ENCODE measurements at regions of chr14 and their contacts with region 1.

Region 1: GRCh38 chr14:55665067-55665675 is 85.2 kb downstream of the KTN1 start:
- DNase-seq: no peak
- ATAC-seq: no peak
- H3K4me3 ChIP-seq: no peak overlapping the region
- H3K27ac ChIP-seq: no peak overlapping the region
- H3K4me1 ChIP-seq: no peaks in the 10 kb centered on the region
- H3K27me3 ChIP-seq: no peaks in the 10 kb centered on the region
- CTCF ChIP-seq: no peak
- EP300 ChIP-seq: no peak
- POLR2A ChIP-seq: no peak
- RAD21 ChIP-seq: no peak

Region 2: GRCh38 chr14:55123101-55123500 is 542.1 kb before region 1 on chr14:
- CTCF ChIA-PET with region 1: no interaction called
- POLR2A ChIA-PET with region 1: no interaction called
- in situ Hi-C with region 1: no loop called
- intact Hi-C with region 1: no loop called
- DNase-seq: no peak
- ATAC-seq: peak; percentile 22
- H3K4me3 ChIP-seq: peak overlapping the region in 1 of 3 experiments; percentile 34; a peak in 1 of 6 replicates
- H3K27ac ChIP-seq: peak overlapping the region; percentile 61
- H3K4me1 ChIP-seq: peaks cover 48% of the 10 kb centered on the region
- H3K27me3 ChIP-seq: peaks cover 2 to 10% of the 10 kb centered on the region in 2 experiments; a peak in 3 of 5 replicates
- CTCF ChIP-seq: no peak
- EP300 ChIP-seq: no peak
- POLR2A ChIP-seq: no peak
- RAD21 ChIP-seq: no peak

Region 3: GRCh38 chr14:55446218-55446654 is 218.9 kb before region 1 on chr14:
- CTCF ChIA-PET with region 1: no interaction called
- POLR2A ChIA-PET with region 1: no interaction called
- in situ Hi-C with region 1: loop called (anchors 25 kb)
- intact Hi-C with region 1: no loop called
- DNase-seq: peak; percentile 64
- ATAC-seq: peak; percentile 80
- H3K4me3 ChIP-seq: no peak overlapping the region
- H3K27ac ChIP-seq: no peak overlapping the region
- H3K4me1 ChIP-seq: 0 out of 2 replicates have a peak, but pooled peaks cover 5% of the 10 kb centered on the region
- H3K27me3 ChIP-seq: peaks cover 0 to 4% of the 10 kb centered on the region in 2 experiments; a peak in 1 of 5 replicates
- CTCF ChIP-seq: peak; percentile 78
- EP300 ChIP-seq: no peak
- POLR2A ChIP-seq: no peak
- RAD21 ChIP-seq: no peak

Region 4: DNA sequence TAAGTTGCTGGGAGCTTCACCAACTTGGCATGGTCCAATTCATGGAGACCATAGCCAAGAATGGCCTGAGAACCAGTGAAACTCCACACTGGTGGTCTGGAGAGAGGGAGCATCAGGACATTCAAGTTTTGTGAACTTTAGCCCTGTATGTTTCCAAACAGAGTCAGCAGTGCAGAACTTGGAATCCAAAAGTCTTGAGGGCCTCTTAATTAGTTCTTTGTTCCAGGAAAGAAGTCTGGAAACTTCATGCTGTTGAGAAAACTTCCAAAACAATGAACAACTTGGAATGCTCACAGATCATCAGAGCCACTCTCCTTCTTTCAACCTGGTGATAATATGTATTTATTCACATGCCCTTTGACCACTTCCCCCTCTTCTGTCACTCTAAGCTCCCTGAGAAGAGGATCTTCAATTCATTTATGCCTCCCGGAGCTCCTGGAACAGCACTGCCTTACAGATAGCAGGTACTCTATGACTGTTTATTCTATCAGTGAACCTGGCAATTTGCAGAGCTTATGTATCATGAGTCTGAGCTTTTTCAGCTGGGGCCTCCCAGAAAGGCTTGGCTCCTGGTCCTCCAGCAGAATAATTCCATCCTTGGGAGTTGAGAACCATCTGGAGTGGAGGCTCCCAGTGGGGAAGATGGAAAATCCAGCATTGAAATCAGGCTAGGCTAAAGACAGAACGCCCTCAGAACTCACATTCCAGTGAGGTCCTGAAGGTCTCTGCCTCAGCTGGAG is 106.2 kb after region 1 on chr14:
- CTCF ChIA-PET with region 1: no interaction called
- POLR2A ChIA-PET with region 1: no interaction called
- in situ Hi-C with region 1: no loop called
- intact Hi-C with region 1: no loop called
- DNase-seq: no peak
- ATAC-seq: no peak
- H3K4me3 ChIP-seq: no peak overlapping the region
- H3K27ac ChIP-seq: no peak overlapping the region
- H3K4me1 ChIP-seq: peaks cover 11% of the 10 kb centered on the region
- H3K27me3 ChIP-seq: no peaks in the 10 kb centered on the region; a peak in 1 of 5 replicates
- CTCF ChIP-seq: no peak
- EP300 ChIP-seq: no peak
- POLR2A ChIP-seq: no peak
- RAD21 ChIP-seq: no peak